CD8-positive, alpha-beta T cell (primary cell): ENCODE measurements at regions of chr22 and their contacts with region 1.

Region 1: DNA sequence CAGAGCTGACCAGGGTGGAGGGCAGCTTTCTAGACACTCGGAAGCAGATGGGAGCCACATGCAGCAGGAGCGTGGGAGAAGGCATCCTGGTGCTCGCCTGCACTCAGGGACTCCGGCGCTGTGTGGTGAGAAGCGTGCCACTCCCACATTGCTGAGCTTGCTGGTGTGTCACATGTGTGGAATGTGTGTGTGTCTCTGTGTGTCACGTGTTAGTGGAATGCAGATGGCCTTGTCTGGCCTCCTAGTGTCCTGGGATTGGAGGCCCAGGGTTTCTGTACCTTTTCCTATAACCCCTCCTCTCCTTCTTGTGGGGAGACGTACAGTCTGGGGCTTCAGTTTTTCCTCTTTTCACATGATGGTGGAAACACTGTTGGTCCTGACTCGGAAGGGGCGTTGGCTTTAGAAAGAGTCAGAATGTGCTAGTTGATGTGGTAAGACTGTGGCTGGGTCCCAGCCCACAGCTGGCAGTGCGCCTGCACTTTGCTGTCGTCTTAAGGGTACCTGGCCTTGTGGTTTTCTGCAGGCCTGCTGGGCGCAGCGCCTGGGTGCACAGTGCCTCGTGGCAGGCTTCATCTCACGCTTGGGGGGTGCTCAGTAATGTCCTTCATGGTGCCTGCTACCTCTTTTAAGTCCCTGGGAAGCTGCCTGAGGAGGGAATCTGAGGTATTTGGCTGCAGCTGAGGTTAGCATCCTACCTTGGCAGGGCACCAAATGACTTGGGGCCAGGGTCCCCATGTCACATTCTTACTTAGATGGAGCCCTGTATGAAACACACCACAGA is 61.8 kb downstream of the MED15 start:
- DNase-seq: peak; percentile 73 to 96 (median 88)
- ATAC-seq: peak; percentile 62
- H3K4me3 ChIP-seq: peak overlapping the region; percentile 12 to 30
- H3K4me3 Mint-ChIP-seq: peak overlapping the region; percentile 82
- H3K27ac ChIP-seq: peak overlapping the region; percentile 54 to 75
- H3K27ac Mint-ChIP-seq: peak overlapping the region; percentile 96
- H3K4me1 ChIP-seq: peaks cover 81% of the 10 kb centered on the region
- H3K4me1 Mint-ChIP-seq: peaks cover 80% of the 10 kb centered on the region
- H3K27me3 ChIP-seq: no peaks in the 10 kb centered on the region
- H3K27me3 Mint-ChIP-seq: no peaks in the 10 kb centered on the region
- CTCF ChIP-seq: no peak

Region 2: DNA sequence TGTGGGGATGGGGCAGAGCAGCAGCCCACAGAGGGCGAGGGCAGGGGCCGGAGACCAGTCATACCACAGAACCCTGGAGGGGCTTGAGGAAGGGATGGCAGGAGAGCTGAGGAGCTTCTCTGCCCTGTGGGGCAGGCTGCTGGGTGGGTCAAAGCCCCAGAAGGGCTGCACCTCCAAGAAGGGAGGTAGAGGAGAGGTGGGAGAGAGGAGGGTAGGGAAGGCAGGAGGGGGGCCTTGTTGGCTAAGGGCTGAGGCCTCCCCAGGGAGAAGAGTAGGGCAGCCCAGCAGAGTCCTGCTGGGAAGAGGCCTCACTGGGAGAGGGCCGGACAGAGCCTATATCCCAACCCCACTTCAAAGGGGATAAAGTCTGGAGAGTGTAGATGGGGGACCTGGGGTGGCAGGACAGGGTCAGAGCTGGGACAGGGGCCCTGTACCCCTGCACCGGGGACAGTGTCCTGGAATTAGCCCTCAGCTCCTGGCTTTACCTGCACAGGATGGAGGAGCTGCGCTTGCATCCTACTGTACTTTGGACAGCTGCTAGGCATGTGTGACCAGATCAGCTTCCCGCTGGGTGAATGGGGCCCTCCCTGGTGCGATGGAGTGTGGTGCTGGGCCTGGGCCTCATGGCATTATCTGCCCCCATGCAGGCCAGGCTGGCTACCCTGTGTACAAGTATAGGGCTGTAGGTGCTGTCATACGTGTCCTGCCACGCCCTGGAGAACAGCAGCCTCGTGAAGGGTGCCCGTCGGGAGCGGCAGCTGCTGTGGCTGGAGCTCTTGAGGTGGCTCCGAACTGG is 256.6 kb before region 1 on chr22:
- CTCF ChIA-PET with region 1: no interaction called
- POLR2A ChIA-PET with region 1: no interaction called
- intact Hi-C with region 1: no loop called
- DNase-seq: peak in 3 of 9 experiments; percentile 1 to 45 (median 2)
- ATAC-seq: no peak
- H3K4me3 ChIP-seq: no peak overlapping the region
- H3K4me3 Mint-ChIP-seq: no peak overlapping the region
- H3K27ac ChIP-seq: no peak overlapping the region
- H3K27ac Mint-ChIP-seq: no peak overlapping the region
- H3K4me1 ChIP-seq: peaks cover 9% of the 10 kb centered on the region
- H3K4me1 Mint-ChIP-seq: peaks cover 6% of the 10 kb centered on the region
- H3K27me3 ChIP-seq: no peaks in the 10 kb centered on the region
- H3K27me3 Mint-ChIP-seq: no peaks in the 10 kb centered on the region
- CTCF ChIP-seq: no peak

Region 3: DNA sequence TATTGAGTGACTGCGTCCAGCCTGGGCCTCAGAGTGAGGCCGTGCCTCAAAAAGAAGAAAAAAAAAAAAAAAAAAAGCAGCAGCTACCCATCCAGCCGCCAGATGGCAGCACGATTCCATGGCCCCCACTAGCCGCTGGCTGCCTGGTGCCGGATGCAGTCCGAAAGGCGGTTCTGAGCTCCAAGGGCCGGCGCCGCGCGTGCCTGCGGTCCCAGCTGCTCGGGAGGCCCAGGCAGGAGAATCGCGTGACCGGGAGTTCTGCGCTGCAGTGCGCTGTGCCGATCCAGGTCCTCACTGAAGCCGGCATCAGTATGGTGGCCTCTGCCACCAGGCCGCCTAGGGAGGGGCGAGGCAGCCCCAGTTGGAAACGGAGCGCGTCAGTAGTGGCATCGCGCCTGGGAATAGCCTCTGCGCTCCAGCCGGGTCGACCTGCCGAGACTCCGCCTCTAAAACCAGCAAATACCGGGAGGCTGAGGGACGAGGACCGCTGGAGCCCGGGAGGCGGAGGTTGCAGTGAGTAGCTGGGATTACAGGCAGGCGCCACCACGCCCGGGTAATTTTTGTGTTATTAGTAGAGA is 150.9 kb before region 1 on chr22:
- CTCF ChIA-PET with region 1: interaction called, 12 read pairs
- POLR2A ChIA-PET with region 1: no interaction called
- intact Hi-C with region 1: loop called (anchors 2 to 5 kb)
- DNase-seq: peak; percentile 40 to 88 (median 76)
- ATAC-seq: peak; percentile 82
- H3K4me3 ChIP-seq: peak overlapping the region; percentile 37 to 44
- H3K4me3 Mint-ChIP-seq: peak overlapping the region; percentile 68
- H3K27ac ChIP-seq: no peak overlapping the region
- H3K27ac Mint-ChIP-seq: no peak overlapping the region
- H3K4me1 ChIP-seq: no peaks in the 10 kb centered on the region
- H3K4me1 Mint-ChIP-seq: peaks cover 3% of the 10 kb centered on the region
- H3K27me3 ChIP-seq: no peaks in the 10 kb centered on the region
- H3K27me3 Mint-ChIP-seq: no peaks in the 10 kb centered on the region
- CTCF ChIP-seq: peak; percentile 92

Region 4: GRCh38 chr22:20463324-20464095 is 105.7 kb before region 1 on chr22:
- CTCF ChIA-PET with region 1: interaction called, 26 read pairs
- POLR2A ChIA-PET with region 1: interaction called, 16 read pairs
- intact Hi-C with region 1: loop called in 1 of 2 experiments (anchors 5 kb)
- DNase-seq: peak in 8 of 9 experiments; percentile 33 to 78 (median 60)
- ATAC-seq: peak; percentile 61
- H3K4me3 ChIP-seq: peak overlapping the region in 1 of 2 experiments; percentile 10
- H3K4me3 Mint-ChIP-seq: peak overlapping the region; percentile 74
- H3K27ac ChIP-seq: peak overlapping the region; percentile 84 to 90
- H3K27ac Mint-ChIP-seq: peak overlapping the region; percentile 98
- H3K4me1 ChIP-seq: peaks cover 57% of the 10 kb centered on the region
- H3K4me1 Mint-ChIP-seq: peaks cover 61% of the 10 kb centered on the region
- H3K27me3 ChIP-seq: no peaks in the 10 kb centered on the region
- H3K27me3 Mint-ChIP-seq: no peaks in the 10 kb centered on the region
- CTCF ChIP-seq: no peak

Region 5: GRCh38 chr22:20507253-20508066 is 61.7 kb before region 1 on chr22 and contains the start of gene MED15:
- CTCF ChIA-PET with region 1: interaction called, 64 read pairs
- POLR2A ChIA-PET with region 1: interaction called, 6 read pairs
- intact Hi-C with region 1: loop called (anchors 1 to 2 kb)
- DNase-seq: peak; percentile 71 to 93 (median 88)
- ATAC-seq: peak; percentile 81
- H3K4me3 ChIP-seq: peak within 1 kb of the TSS; percentile 92 to 100
- H3K4me3 Mint-ChIP-seq: peak within 1 kb of the TSS; percentile 95
- H3K27ac ChIP-seq: peak within 1 kb of the TSS; percentile 86 to 95
- H3K27ac Mint-ChIP-seq: peak within 1 kb of the TSS; percentile 96
- H3K4me1 ChIP-seq: peaks cover 34% of the 10 kb centered on the region
- H3K4me1 Mint-ChIP-seq: peaks cover 49% of the 10 kb centered on the region
- H3K27me3 ChIP-seq: no peaks in the 10 kb centered on the region
- H3K27me3 Mint-ChIP-seq: no peaks in the 10 kb centered on the region
- CTCF ChIP-seq: no peak
- total RNA-seq, gene MED15: 316 TPM

Region 6: GRCh38 chr22:20536590-20537324 is 32.4 kb before region 1 on chr22:
- CTCF ChIA-PET with region 1: interaction called, 382 read pairs
- POLR2A ChIA-PET with region 1: interaction called, 3 read pairs
- intact Hi-C with region 1: no loop called
- DNase-seq: no peak
- ATAC-seq: no peak
- H3K4me3 ChIP-seq: no peak overlapping the region
- H3K4me3 Mint-ChIP-seq: no peak overlapping the region
- H3K27ac ChIP-seq: no peak overlapping the region
- H3K27ac Mint-ChIP-seq: peak overlapping the region; percentile 62
- H3K4me1 ChIP-seq: peaks cover 30% of the 10 kb centered on the region
- H3K4me1 Mint-ChIP-seq: peaks cover 54% of the 10 kb centered on the region
- H3K27me3 ChIP-seq: no peaks in the 10 kb centered on the region
- H3K27me3 Mint-ChIP-seq: no peaks in the 10 kb centered on the region
- CTCF ChIP-seq: no peak

Region 7: GRCh38 chr22:20579353-20580120 is 10.4 kb after region 1 on chr22:
- CTCF ChIA-PET with region 1: interaction called, 44 read pairs
- POLR2A ChIA-PET with region 1: interaction called, 6 read pairs
- intact Hi-C with region 1: no loop called
- DNase-seq: peak in 1 of 9 experiments; percentile 3
- ATAC-seq: no peak
- H3K4me3 ChIP-seq: no peak overlapping the region
- H3K4me3 Mint-ChIP-seq: no peak overlapping the region
- H3K27ac ChIP-seq: peak overlapping the region in 1 of 2 experiments; percentile 58
- H3K27ac Mint-ChIP-seq: peak overlapping the region; percentile 37
- H3K4me1 ChIP-seq: peaks cover 43% of the 10 kb centered on the region
- H3K4me1 Mint-ChIP-seq: peaks cover 45% of the 10 kb centered on the region
- H3K27me3 ChIP-seq: no peaks in the 10 kb centered on the region
- H3K27me3 Mint-ChIP-seq: no peaks in the 10 kb centered on the region
- CTCF ChIP-seq: no peak